ENCODE measurements at regions of chr19 and their contacts with region 1.

Region 1: GRCh38 chr19:30649934-30650614 is 277.9 kb downstream of the ZNF536 start:
- DNase-seq: peak; percentile 45 to 59 (median 49)
- ATAC-seq: peak; percentile 68
- H3K4me3 ChIP-seq: no peak overlapping the region
- H3K27ac ChIP-seq: no peak overlapping the region
- H3K4me1 ChIP-seq: no peaks in the 10 kb centered on the region
- H3K27me3 ChIP-seq: peaks cover 3 to 29% of the 10 kb centered on the region in 2 experiments; a peak in 3 of 5 replicates
- CTCF ChIP-seq: peak; percentile 56 to 85 (median 77)
- EP300 ChIP-seq: no peak
- POLR2A ChIP-seq: no peak
- RAD21 ChIP-seq: peak; percentile 57 to 81

Region 2: GRCh38 chr19:29735800-29736199 is 914.3 kb before region 1 on chr19:
- CTCF ChIA-PET with region 1: no interaction called
- POLR2A ChIA-PET with region 1: no interaction called
- in situ Hi-C with region 1: loop called (anchors 10 kb)
- intact Hi-C with region 1: loop called (anchors 10 kb)
- DNase-seq: no peak
- ATAC-seq: no peak
- H3K4me3 ChIP-seq: no peak overlapping the region
- H3K27ac ChIP-seq: no peak overlapping the region
- H3K4me1 ChIP-seq: no peaks in the 10 kb centered on the region
- H3K27me3 ChIP-seq: peaks cover 53 to 62% of the 10 kb centered on the region in 2 experiments; a peak in 4 of 5 replicates
- CTCF ChIP-seq: no peak
- EP300 ChIP-seq: no peak
- POLR2A ChIP-seq: no peak
- RAD21 ChIP-seq: no peak

Region 3: GRCh38 chr19:29745253-29745652 is 904.8 kb before region 1 on chr19:
- CTCF ChIA-PET with region 1: no interaction called
- POLR2A ChIA-PET with region 1: no interaction called
- in situ Hi-C with region 1: loop called (anchors 10 kb)
- intact Hi-C with region 1: no loop called
- DNase-seq: peak in 3 of 4 experiments; percentile 18 to 32 (median 30)
- ATAC-seq: peak; percentile 94
- H3K4me3 ChIP-seq: no peak overlapping the region
- H3K27ac ChIP-seq: no peak overlapping the region
- H3K4me1 ChIP-seq: no peaks in the 10 kb centered on the region
- H3K27me3 ChIP-seq: peaks cover 14 to 42% of the 10 kb centered on the region in 2 experiments; a peak in 4 of 5 replicates
- CTCF ChIP-seq: peak; percentile 55 to 83 (median 67)
- EP300 ChIP-seq: no peak
- POLR2A ChIP-seq: no peak
- RAD21 ChIP-seq: peak in 1 of 2 experiments; percentile 6; a peak in 1 of 4 replicates

Region 4: GRCh38 chr19:29858000-29858596 is 792.0 kb before region 1 on chr19:
- CTCF ChIA-PET with region 1: no interaction called
- POLR2A ChIA-PET with region 1: no interaction called
- in situ Hi-C with region 1: loop called (anchors 10 kb)
- intact Hi-C with region 1: no loop called
- DNase-seq: peak; percentile 66 to 77 (median 72)
- ATAC-seq: peak; percentile 91
- H3K4me3 ChIP-seq: no peak overlapping the region
- H3K27ac ChIP-seq: no peak overlapping the region
- H3K4me1 ChIP-seq: peaks cover 9 to 18% of the 10 kb centered on the region in 2 experiments
- H3K27me3 ChIP-seq: peaks cover 10 to 12% of the 10 kb centered on the region in 2 experiments; a peak in 4 of 5 replicates
- CTCF ChIP-seq: peak; percentile 72 to 83 (median 78)
- EP300 ChIP-seq: no peak
- POLR2A ChIP-seq: no peak
- RAD21 ChIP-seq: peak; percentile 67 to 74

Region 5: GRCh38 chr19:29873024-29873800 is 776.9 kb before region 1 on chr19:
- CTCF ChIA-PET with region 1: no interaction called
- POLR2A ChIA-PET with region 1: no interaction called
- in situ Hi-C with region 1: no loop called
- intact Hi-C with region 1: loop called (anchors 5 kb)
- DNase-seq: peak; percentile 61 to 83 (median 78)
- ATAC-seq: peak; percentile 92
- H3K4me3 ChIP-seq: peak overlapping the region; percentile 38
- H3K27ac ChIP-seq: no peak overlapping the region
- H3K4me1 ChIP-seq: peaks cover 7 to 22% of the 10 kb centered on the region in 2 experiments
- H3K27me3 ChIP-seq: peaks cover 6 to 18% of the 10 kb centered on the region in 2 experiments; a peak in 3 of 5 replicates
- CTCF ChIP-seq: peak; percentile 68 to 83 (median 71); a peak in 5 of 6 replicates
- EP300 ChIP-seq: no peak
- POLR2A ChIP-seq: no peak
- RAD21 ChIP-seq: peak; percentile 87 to 95

Region 6: GRCh38 chr19:30222428-30222873 is 427.6 kb before region 1 on chr19:
- CTCF ChIA-PET with region 1: no interaction called
- POLR2A ChIA-PET with region 1: no interaction called
- in situ Hi-C with region 1: loop called (anchors 5 kb)
- intact Hi-C with region 1: no loop called
- DNase-seq: peak; percentile 31 to 75 (median 71)
- ATAC-seq: peak; percentile 96
- H3K4me3 ChIP-seq: no peak overlapping the region
- H3K27ac ChIP-seq: no peak overlapping the region
- H3K4me1 ChIP-seq: peaks cover 0 to 16% of the 10 kb centered on the region in 2 experiments; a peak in 2 of 5 replicates
- H3K27me3 ChIP-seq: peaks cover 12 to 37% of the 10 kb centered on the region in 2 experiments; a peak in 4 of 5 replicates
- CTCF ChIP-seq: peak; percentile 56 to 71 (median 58)
- EP300 ChIP-seq: no peak
- POLR2A ChIP-seq: no peak
- RAD21 ChIP-seq: peak in 1 of 2 experiments; percentile 19; a peak in 1 of 4 replicates

Region 7: GRCh38 chr19:30229214-30230174 is 420.6 kb before region 1 on chr19:
- CTCF ChIA-PET with region 1: no interaction called
- POLR2A ChIA-PET with region 1: no interaction called
- in situ Hi-C with region 1: loop called (anchors 5 kb)
- intact Hi-C with region 1: loop called (anchors 5 kb)
- DNase-seq: no peak
- ATAC-seq: no peak
- H3K4me3 ChIP-seq: no peak overlapping the region
- H3K27ac ChIP-seq: no peak overlapping the region
- H3K4me1 ChIP-seq: peaks cover 0 to 18% of the 10 kb centered on the region in 2 experiments; a peak in 2 of 5 replicates
- H3K27me3 ChIP-seq: peaks cover 27 to 51% of the 10 kb centered on the region in 2 experiments; a peak in 4 of 5 replicates
- CTCF ChIP-seq: no peak
- EP300 ChIP-seq: no peak
- POLR2A ChIP-seq: no peak
- RAD21 ChIP-seq: no peak

Measured in K562 (cell line).